K562 (cell line): ENCODE measurements at regions of chr11 and their contacts with region 1.

Region 1: GRCh38 chr11:3234846-3235245 is 2.6 kb upstream of the MRGPRE start:
- DNase-seq: no peak
- ATAC-seq: no peak
- H3K4me3 ChIP-seq: no peak overlapping the region
- H3K27ac ChIP-seq: no peak overlapping the region
- H3K4me1 ChIP-seq: peaks cover 16 to 34% of the 10 kb centered on the region in 2 experiments
- H3K27me3 ChIP-seq: no peaks in the 10 kb centered on the region
- CTCF ChIP-seq: no peak
- EP300 ChIP-seq: no peak
- POLR2A ChIP-seq: no peak
- RAD21 ChIP-seq: no peak

Region 2: DNA sequence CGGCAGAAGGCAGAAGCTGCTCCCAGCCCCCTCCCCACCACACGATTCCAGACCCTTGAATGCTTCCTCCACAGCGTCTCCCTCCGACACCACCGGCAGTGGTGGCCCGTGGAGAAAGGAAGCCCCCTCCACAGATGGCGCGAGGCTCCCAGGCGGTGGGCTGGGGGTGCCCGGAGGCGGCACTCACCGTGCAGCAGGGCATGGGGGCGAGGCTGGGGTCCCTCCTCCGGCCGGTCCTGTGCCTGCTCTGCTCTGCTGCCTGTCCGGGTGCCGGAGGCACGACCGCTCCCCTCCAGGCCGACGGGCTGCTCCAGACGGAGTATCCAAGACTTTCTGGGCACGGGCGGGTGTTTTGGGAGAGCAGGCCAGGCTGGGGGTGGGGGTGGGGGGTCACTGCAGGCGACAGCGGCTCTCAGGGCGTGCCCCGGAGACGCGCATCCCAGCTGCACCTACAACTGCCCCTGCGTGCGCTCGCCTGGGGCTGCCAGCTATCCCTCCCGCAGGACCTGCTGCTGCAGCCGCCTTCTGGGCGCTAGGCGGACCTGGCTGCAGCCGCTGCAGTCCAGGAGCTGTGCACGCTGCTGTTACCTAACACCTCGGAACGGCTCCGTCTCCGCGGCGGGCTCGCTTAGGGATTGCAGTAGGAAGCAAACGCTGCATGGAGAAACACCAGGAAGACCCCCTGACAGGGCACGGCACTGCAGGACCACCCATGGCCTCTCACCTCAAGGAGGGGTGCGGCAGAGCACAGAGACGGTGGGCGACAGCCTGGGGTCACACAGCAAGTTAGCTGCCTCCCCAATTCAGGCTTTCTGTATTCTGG is 31.4 kb before region 1 on chr11:
- CTCF ChIA-PET with region 1: no interaction called
- POLR2A ChIA-PET with region 1: no interaction called
- in situ Hi-C with region 1: no loop called
- intact Hi-C with region 1: no loop called
- DNase-seq: no peak
- ATAC-seq: 0 out of 3 replicates have a peak, but pooled peaks have one; percentile 27
- H3K4me3 ChIP-seq: no peak overlapping the region
- H3K27ac ChIP-seq: no peak overlapping the region
- H3K4me1 ChIP-seq: peaks cover 0 to 31% of the 10 kb centered on the region in 2 experiments; a peak in 2 of 5 replicates
- H3K27me3 ChIP-seq: peaks cover 33 to 65% of the 10 kb centered on the region in 2 experiments; a peak in 4 of 5 replicates
- CTCF ChIP-seq: 0 out of 6 replicates have a peak, but pooled peaks of 1 of the 3 experiments have one; percentile 9
- EP300 ChIP-seq: no peak
- POLR2A ChIP-seq: no peak
- RAD21 ChIP-seq: no peak

Region 3: DNA sequence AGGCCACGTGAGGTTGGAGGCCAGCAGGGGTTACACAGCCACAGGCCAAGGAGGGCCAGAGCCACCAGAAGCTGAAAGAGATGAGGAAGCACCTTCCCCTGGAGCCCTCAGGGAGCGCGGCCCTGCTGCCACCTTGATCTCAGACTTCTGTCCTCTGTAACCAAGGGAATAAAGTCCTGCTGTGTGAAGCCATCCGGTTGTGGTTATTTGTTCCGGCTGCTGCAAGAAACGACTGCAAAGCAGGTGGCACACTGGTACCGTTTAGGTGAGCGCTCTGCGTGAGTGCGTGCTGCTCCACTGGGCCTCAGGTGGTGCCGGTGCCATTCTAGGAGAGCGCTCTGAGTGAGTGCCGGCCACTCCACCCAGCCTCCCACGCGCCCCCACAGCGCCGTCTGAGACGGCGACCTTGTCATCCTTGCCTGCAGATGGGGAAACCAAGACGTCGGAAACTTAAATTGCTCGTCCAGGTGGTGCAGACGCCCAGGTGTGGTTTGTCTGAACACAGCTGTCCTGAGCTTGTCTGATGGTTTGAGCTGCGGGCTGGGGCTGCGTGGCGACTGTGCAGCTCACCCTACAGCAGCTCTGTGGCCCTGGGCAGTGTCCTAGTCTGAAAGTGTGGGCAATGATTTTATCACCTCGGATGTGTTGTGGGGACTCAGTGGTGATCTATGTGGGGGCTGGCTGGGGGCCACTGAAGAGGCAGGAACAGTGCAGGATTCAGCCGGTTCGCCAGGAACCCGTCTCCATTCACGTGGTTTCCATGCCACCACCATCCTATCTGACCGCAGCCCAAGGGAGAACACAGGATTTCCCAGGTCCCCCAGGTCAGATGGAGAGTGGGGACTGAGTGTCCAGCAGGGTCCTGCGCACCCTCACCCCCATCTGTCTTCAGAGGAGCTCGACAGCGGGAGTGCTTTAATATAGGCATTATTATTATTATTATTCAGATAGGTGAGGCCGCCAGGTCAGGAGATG is 11.6 kb before region 1 on chr11:
- CTCF ChIA-PET with region 1: no interaction called
- POLR2A ChIA-PET with region 1: interaction called, 13 read pairs
- in situ Hi-C with region 1: no loop called
- intact Hi-C with region 1: no loop called
- DNase-seq: no peak
- ATAC-seq: no peak
- H3K4me3 ChIP-seq: no peak overlapping the region
- H3K27ac ChIP-seq: no peak overlapping the region
- H3K4me1 ChIP-seq: peaks cover 15 to 98% of the 10 kb centered on the region in 2 experiments; a peak in 4 of 5 replicates
- H3K27me3 ChIP-seq: no peaks in the 10 kb centered on the region
- CTCF ChIP-seq: no peak
- EP300 ChIP-seq: no peak
- POLR2A ChIP-seq: no peak
- RAD21 ChIP-seq: no peak

Region 4: GRCh38 chr11:3359092-3359824 is 124.4 kb after region 1 on chr11:
- CTCF ChIA-PET with region 1: no interaction called
- POLR2A ChIA-PET with region 1: no interaction called
- in situ Hi-C with region 1: no loop called
- intact Hi-C with region 1: no loop called
- DNase-seq: no peak
- ATAC-seq: peak; percentile 64
- H3K4me3 ChIP-seq: no peak overlapping the region
- H3K27ac ChIP-seq: no peak overlapping the region
- H3K4me1 ChIP-seq: no peaks in the 10 kb centered on the region
- H3K27me3 ChIP-seq: no peaks in the 10 kb centered on the region
- CTCF ChIP-seq: no peak
- EP300 ChIP-seq: no peak
- POLR2A ChIP-seq: peak; percentile 52; the same call in 1 of the 2 replicates
- RAD21 ChIP-seq: no peak